Esophagus muscularis mucosa (tissue), 4 donors: ENCODE measurements at regions of chr10 and their contacts with region 1.

Region 1: DNA sequence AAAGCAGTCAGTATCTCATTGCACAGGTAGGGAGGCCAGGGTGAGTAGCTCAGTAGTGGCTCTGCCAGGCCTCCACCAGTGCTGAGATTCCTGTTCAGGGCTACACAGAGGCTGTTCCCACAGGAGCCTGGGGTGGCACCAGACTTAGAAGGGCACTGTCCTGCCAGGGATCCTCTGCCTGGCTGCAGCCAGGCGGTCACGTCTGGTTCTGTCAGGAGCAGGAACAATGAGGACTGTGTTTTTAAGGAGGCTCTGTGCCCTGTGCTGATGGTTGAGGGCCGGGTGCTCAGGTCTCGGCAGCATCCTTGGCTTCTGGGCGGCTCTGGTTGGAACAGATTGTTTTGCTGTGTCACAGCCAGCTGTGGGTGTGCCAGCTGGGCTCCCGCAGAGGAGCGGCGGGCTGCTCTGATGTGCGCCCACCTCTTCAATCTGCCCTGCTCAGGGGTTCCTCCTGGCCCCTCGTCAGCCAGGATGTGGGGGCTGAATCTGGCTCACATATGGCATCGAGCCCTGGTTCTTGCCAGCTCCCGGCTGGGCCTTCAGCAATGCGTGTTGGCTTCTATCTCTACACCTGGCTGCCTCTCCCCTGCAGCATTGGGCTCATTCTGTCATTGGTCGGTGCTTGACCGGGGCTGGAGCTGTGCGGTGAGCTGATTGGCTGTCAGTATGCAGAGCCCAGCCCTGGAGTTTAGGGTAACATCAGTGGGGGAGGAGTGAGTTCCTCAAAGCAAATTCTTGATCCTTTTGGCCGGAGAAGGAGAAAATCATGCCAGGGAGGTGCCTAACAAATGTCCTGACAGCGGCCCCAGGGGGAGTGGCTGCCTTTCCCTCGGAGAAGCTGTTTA is 41.2 kb downstream of the TACR2 start:
- DNase-seq: no peak
- H3K4me3 ChIP-seq: peak overlapping the region; percentile 24 to 37 (median 34)
- H3K27ac ChIP-seq: peak overlapping the region; percentile 78 to 84 (median 82)
- H3K4me1 ChIP-seq: peaks cover 35 to 57% (median 53%) of the 10 kb centered on the region in 4 donors
- H3K27me3 ChIP-seq: no peaks in the 10 kb centered on the region
- CTCF ChIP-seq: peak in 1 of 3 experiments; percentile 26
- EP300 ChIP-seq: no peak
- POLR2A ChIP-seq: no peak

Region 2: DNA sequence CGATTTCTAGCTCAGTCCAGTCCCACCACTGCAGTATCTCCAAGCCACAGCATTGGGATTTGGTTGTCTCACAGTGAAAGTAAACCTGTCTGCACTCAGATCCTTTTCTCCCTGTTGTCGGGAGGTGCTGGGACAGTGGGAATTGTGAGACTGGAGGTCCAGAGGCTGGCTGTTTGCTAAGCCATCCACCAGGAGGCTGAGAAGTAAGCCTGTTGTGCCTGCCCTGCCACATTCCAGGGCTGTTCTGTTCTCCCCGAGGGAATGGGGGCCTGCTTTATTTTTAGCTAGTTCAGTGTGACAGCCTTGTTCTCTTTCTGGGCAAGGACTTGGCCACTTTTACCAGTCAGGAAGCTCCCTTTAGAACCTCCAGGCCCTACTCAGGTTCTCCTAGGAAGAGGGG is 42.3 kb before region 1 on chr10:
- intact Hi-C with region 1: loop called (anchors 2 kb)
- DNase-seq: no peak
- H3K4me3 ChIP-seq: peak overlapping the region in 1 of 4 donors; percentile 5
- H3K27ac ChIP-seq: peak overlapping the region; percentile 73 to 88 (median 84)
- H3K4me1 ChIP-seq: peaks cover 96 to 100% (median 99%) of the 10 kb centered on the region in 4 donors
- H3K27me3 ChIP-seq: no peaks in the 10 kb centered on the region
- CTCF ChIP-seq: peak; percentile 38 to 62 (median 52)
- EP300 ChIP-seq: no peak
- POLR2A ChIP-seq: no peak

Region 3: GRCh38 chr10:69953851-69954250 is 578.3 kb after region 1 on chr10:
- intact Hi-C with region 1: no loop called
- DNase-seq: no peak
- H3K4me3 ChIP-seq: no peak overlapping the region
- H3K27ac ChIP-seq: no peak overlapping the region
- H3K4me1 ChIP-seq: no peaks in the 10 kb centered on the region
- H3K27me3 ChIP-seq: no peaks in the 10 kb centered on the region
- CTCF ChIP-seq: no peak
- EP300 ChIP-seq: no peak
- POLR2A ChIP-seq: no peak